CD4-positive, alpha-beta memory T cell (primary cell): ENCODE measurements at regions of chr1 and their contacts with region 1.

Region 1: GRCh38 chr1:66331657-66332547 is 202.1 kb upstream of the SGIP1 start:
- DNase-seq: peak; percentile 41 to 71 (median 45)
- H3K4me3 ChIP-seq: peak overlapping the region; percentile 79 to 96
- H3K4me3 Mint-ChIP-seq: peak overlapping the region; percentile 99 to 100 (median 100)
- H3K27ac ChIP-seq: peak overlapping the region; percentile 85
- H3K27ac Mint-ChIP-seq: peak overlapping the region; percentile 97 to 100 (median 98)
- H3K4me1 ChIP-seq: peaks cover 53% of the 10 kb centered on the region
- H3K4me1 Mint-ChIP-seq: peaks cover 26 to 78% (median 46%) of the 10 kb centered on the region in 4 donors
- H3K27me3 ChIP-seq: no peaks in the 10 kb centered on the region
- H3K27me3 Mint-ChIP-seq: no peaks in the 10 kb centered on the region

Region 2: GRCh38 chr1:65509912-65510680 is 821.8 kb before region 1 on chr1:
- CTCF ChIA-PET with region 1: no interaction called
- POLR2A ChIA-PET with region 1: no interaction called
- intact Hi-C with region 1: no loop called
- DNase-seq: no peak
- H3K4me3 ChIP-seq: no peak overlapping the region
- H3K4me3 Mint-ChIP-seq: no peak overlapping the region
- H3K27ac ChIP-seq: no peak overlapping the region
- H3K27ac Mint-ChIP-seq: no peak overlapping the region
- H3K4me1 ChIP-seq: no peaks in the 10 kb centered on the region
- H3K4me1 Mint-ChIP-seq: no peaks in the 10 kb centered on the region
- H3K27me3 ChIP-seq: no peaks in the 10 kb centered on the region
- H3K27me3 Mint-ChIP-seq: no peaks in the 10 kb centered on the region

Region 3: GRCh38 chr1:66253330-66253921 is 78.5 kb before region 1 on chr1:
- CTCF ChIA-PET with region 1: interaction called, 11 read pairs
- POLR2A ChIA-PET with region 1: interaction called, 18 read pairs
- intact Hi-C with region 1: loop called (anchors 1 kb)
- DNase-seq: peak in 4 of 5 donors; percentile 45 to 55 (median 50)
- H3K4me3 ChIP-seq: no peak overlapping the region
- H3K4me3 Mint-ChIP-seq: no peak overlapping the region
- H3K27ac ChIP-seq: no peak overlapping the region
- H3K27ac Mint-ChIP-seq: peak overlapping the region in 1 of 7 donors; percentile 57
- H3K4me1 ChIP-seq: peaks cover 26% of the 10 kb centered on the region
- H3K4me1 Mint-ChIP-seq: peaks cover 5 to 24% (median 16%) of the 10 kb centered on the region in 4 donors
- H3K27me3 ChIP-seq: no peaks in the 10 kb centered on the region
- H3K27me3 Mint-ChIP-seq: peaks cover 0 to 2% of the 10 kb centered on the region in 2 donors

Region 4: GRCh38 chr1:66282343-66282852 is 49.5 kb before region 1 on chr1:
- CTCF ChIA-PET with region 1: interaction called, 27 read pairs
- POLR2A ChIA-PET with region 1: interaction called, 21 read pairs
- intact Hi-C with region 1: loop called (anchors 1 kb)
- DNase-seq: peak; percentile 71 to 89 (median 79)
- H3K4me3 ChIP-seq: no peak overlapping the region
- H3K4me3 Mint-ChIP-seq: peak overlapping the region in 4 of 8 donors; percentile 12 to 67 (median 42)
- H3K27ac ChIP-seq: peak overlapping the region; percentile 57
- H3K27ac Mint-ChIP-seq: peak overlapping the region; percentile 93 to 97 (median 95)
- H3K4me1 ChIP-seq: peaks cover 90% of the 10 kb centered on the region
- H3K4me1 Mint-ChIP-seq: peaks cover 70 to 93% (median 83%) of the 10 kb centered on the region in 4 donors
- H3K27me3 ChIP-seq: no peaks in the 10 kb centered on the region
- H3K27me3 Mint-ChIP-seq: peaks cover 0 to 3% of the 10 kb centered on the region in 2 donors

Region 5: DNA sequence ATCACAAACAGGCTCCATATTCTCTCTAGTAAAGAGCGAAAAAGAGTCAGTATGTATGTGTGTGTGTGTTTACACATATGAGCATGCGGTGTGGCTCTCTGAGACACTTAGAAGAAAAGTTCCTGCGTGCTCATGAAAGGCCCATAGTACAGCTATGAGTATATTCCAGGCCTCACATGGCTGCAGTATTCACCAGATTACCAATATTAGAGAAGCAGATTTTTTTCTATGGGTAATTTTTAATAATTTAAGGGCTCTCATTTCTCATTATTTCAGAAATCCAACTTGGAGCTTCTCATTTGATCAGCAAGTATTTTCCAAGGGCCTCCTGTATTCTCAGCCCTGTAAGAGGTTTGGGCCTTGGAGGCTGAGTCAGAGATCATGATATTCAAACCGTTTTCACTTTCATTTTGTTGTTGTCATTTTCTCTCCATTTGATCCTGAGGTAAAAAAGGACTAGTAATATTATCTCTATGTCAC is 30.9 kb before region 1 on chr1:
- CTCF ChIA-PET with region 1: interaction called, 18 read pairs
- POLR2A ChIA-PET with region 1: interaction called, 101 read pairs
- intact Hi-C with region 1: loop called (anchors 1 kb)
- DNase-seq: peak; percentile 56 to 68 (median 58)
- H3K4me3 ChIP-seq: no peak overlapping the region
- H3K4me3 Mint-ChIP-seq: peak overlapping the region; percentile 80 to 90 (median 84)
- H3K27ac ChIP-seq: peak overlapping the region; percentile 52
- H3K27ac Mint-ChIP-seq: peak overlapping the region; percentile 83 to 98 (median 96)
- H3K4me1 ChIP-seq: peaks cover 32% of the 10 kb centered on the region
- H3K4me1 Mint-ChIP-seq: peaks cover 23 to 41% (median 30%) of the 10 kb centered on the region in 4 donors
- H3K27me3 ChIP-seq: no peaks in the 10 kb centered on the region
- H3K27me3 Mint-ChIP-seq: no peaks in the 10 kb centered on the region

Region 6: GRCh38 chr1:66350001-66350547 is 18.2 kb after region 1 on chr1:
- CTCF ChIA-PET with region 1: interaction called, 140 read pairs
- POLR2A ChIA-PET with region 1: interaction called, 471 read pairs
- intact Hi-C with region 1: loop called (anchors 1 kb)
- DNase-seq: peak; percentile 73 to 82 (median 77)
- H3K4me3 ChIP-seq: peak overlapping the region in 1 of 2 donors; percentile 11
- H3K4me3 Mint-ChIP-seq: peak overlapping the region; percentile 73 to 83 (median 80)
- H3K27ac ChIP-seq: peak overlapping the region; percentile 70
- H3K27ac Mint-ChIP-seq: peak overlapping the region; percentile 89 to 100 (median 97)
- H3K4me1 ChIP-seq: peaks cover 98% of the 10 kb centered on the region
- H3K4me1 Mint-ChIP-seq: peaks cover 82 to 97% (median 89%) of the 10 kb centered on the region in 4 donors
- H3K27me3 ChIP-seq: no peaks in the 10 kb centered on the region
- H3K27me3 Mint-ChIP-seq: no peaks in the 10 kb centered on the region

Region 7: DNA sequence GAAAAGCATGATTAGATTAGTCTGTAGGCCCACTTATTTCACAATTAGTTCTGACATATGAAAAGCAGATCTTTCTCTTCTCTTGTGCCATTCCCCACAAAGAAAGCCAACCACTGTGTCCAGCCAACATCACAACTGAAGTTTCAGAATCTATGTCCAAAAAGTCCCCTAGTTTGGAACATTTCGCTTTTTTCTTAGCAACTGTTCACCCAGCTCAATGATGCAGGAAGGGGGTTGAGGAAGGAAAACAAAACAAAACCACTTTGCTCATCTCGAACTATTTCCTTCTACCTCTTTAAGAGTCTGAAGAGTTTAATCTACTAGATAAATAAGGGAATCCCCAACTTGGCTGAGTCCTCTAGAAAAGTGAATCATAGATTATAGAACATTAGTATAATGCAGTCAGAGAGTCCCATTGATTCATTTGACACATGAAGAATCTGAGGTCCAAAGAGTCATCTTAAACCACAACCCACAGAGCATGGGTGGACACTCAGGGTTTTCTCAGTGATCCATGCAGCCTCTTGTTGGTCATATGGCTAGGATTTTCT is 42.7 kb after region 1 on chr1:
- CTCF ChIA-PET with region 1: interaction called, 15 read pairs
- POLR2A ChIA-PET with region 1: interaction called, 31 read pairs
- intact Hi-C with region 1: loop called (anchors 1 kb)
- DNase-seq: peak; percentile 51 to 66 (median 54)
- H3K4me3 ChIP-seq: no peak overlapping the region
- H3K4me3 Mint-ChIP-seq: peak overlapping the region; percentile 47 to 86 (median 68)
- H3K27ac ChIP-seq: peak overlapping the region; percentile 58
- H3K27ac Mint-ChIP-seq: peak overlapping the region; percentile 81 to 99 (median 93)
- H3K4me1 ChIP-seq: peaks cover 69% of the 10 kb centered on the region
- H3K4me1 Mint-ChIP-seq: peaks cover 58 to 72% (median 65%) of the 10 kb centered on the region in 4 donors
- H3K27me3 ChIP-seq: no peaks in the 10 kb centered on the region
- H3K27me3 Mint-ChIP-seq: no peaks in the 10 kb centered on the region

Region 8: GRCh38 chr1:66924756-66925557 is 593.1 kb after region 1 on chr1 and contains the starts of genes DNAI4 and MIER1:
- CTCF ChIA-PET with region 1: no interaction called
- POLR2A ChIA-PET with region 1: no interaction called
- intact Hi-C with region 1: loop called (anchors 10 kb)
- DNase-seq: peak; percentile 98 to 99 (median 98)
- H3K4me3 ChIP-seq: peak within 1 kb of the TSS; percentile 95 to 98
- H3K4me3 Mint-ChIP-seq: peak within 1 kb of the TSS; percentile 92 to 99 (median 96)
- H3K27ac ChIP-seq: peak within 1 kb of the TSS; percentile 95
- H3K27ac Mint-ChIP-seq: peak within 1 kb of the TSS; percentile 97 to 99 (median 98)
- H3K4me1 ChIP-seq: peaks cover 47% of the 10 kb centered on the region
- H3K4me1 Mint-ChIP-seq: peaks cover 26 to 63% (median 34%) of the 10 kb centered on the region in 4 donors
- H3K27me3 ChIP-seq: no peaks in the 10 kb centered on the region
- H3K27me3 Mint-ChIP-seq: peaks cover 0 to 1% of the 10 kb centered on the region in 2 donors
- total RNA-seq, gene DNAI4: 7.9 to 11.4 TPM
- total RNA-seq, gene MIER1: 77.0 to 81.3 TPM